ENCODE measurements at regions of chr17 and their contacts with region 1.

Region 1: GRCh38 chr17:45218895-45219661 is 2.6 kb upstream of the FMNL1 start:
- DNase-seq: peak; percentile 89
- ATAC-seq: no peak
- H3K4me3 Mint-ChIP-seq: peak overlapping the region; percentile 88
- H3K27ac Mint-ChIP-seq: peak overlapping the region; percentile 62
- H3K4me1 Mint-ChIP-seq: peaks cover 34% of the 10 kb centered on the region
- H3K27me3 Mint-ChIP-seq: no peaks in the 10 kb centered on the region

Region 2: GRCh38 chr17:44961921-44962350 is 257.1 kb before region 1 on chr17:
- CTCF ChIA-PET with region 1: no interaction called
- DNase-seq: no peak
- ATAC-seq: no peak
- H3K4me3 Mint-ChIP-seq: no peak overlapping the region
- H3K27ac Mint-ChIP-seq: no peak overlapping the region
- H3K4me1 Mint-ChIP-seq: peaks cover 3% of the 10 kb centered on the region
- H3K27me3 Mint-ChIP-seq: peaks cover 75% of the 10 kb centered on the region

Region 3: DNA sequence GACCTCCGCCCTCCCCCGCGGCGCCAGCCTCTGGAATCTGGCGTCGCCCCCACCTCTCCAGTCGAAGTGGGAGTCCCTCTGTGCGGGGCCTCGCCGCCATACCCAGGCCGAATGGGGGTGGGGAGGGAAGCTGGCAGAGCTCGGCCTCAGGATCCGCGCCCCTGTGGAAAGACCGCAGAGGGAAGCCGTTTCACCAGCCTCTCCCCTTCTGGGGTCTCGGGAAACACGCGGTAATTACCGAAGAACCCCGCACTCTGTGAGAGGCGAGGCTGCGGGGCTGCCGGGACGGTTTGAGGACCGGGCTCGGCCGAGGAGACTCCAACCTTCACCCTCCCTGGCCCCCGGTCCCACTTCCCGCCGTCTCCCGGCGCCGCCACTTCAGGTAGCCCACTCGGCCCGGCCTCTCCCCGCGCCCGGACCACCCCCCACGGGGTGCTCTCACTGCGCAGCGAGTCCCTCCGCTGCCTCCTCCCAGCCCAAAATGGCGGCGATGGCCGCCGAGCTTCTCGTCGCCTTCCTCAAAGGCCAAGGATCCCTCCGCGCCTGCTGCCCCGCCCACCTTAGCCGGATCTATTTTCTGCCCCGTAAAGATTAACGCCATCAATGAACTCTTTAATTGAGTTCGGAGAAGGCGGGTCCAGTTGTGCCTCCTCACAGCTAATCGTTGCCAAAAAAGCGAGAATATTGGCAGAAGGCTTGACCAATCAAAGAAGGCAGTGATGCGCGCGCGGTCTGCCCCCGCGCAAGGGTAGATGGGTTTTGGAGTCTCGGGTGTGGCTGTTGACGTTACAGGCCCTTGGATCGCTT is 57.9 kb before region 1 on chr17:
- CTCF ChIA-PET with region 1: interaction called, 10 read pairs
- DNase-seq: peak; percentile 99
- ATAC-seq: peak; percentile 96
- H3K4me3 Mint-ChIP-seq: peak overlapping the region; percentile 98
- H3K27ac Mint-ChIP-seq: peak overlapping the region; percentile 99
- H3K4me1 Mint-ChIP-seq: peaks cover 41% of the 10 kb centered on the region
- H3K27me3 Mint-ChIP-seq: no peaks in the 10 kb centered on the region

Region 4: DNA sequence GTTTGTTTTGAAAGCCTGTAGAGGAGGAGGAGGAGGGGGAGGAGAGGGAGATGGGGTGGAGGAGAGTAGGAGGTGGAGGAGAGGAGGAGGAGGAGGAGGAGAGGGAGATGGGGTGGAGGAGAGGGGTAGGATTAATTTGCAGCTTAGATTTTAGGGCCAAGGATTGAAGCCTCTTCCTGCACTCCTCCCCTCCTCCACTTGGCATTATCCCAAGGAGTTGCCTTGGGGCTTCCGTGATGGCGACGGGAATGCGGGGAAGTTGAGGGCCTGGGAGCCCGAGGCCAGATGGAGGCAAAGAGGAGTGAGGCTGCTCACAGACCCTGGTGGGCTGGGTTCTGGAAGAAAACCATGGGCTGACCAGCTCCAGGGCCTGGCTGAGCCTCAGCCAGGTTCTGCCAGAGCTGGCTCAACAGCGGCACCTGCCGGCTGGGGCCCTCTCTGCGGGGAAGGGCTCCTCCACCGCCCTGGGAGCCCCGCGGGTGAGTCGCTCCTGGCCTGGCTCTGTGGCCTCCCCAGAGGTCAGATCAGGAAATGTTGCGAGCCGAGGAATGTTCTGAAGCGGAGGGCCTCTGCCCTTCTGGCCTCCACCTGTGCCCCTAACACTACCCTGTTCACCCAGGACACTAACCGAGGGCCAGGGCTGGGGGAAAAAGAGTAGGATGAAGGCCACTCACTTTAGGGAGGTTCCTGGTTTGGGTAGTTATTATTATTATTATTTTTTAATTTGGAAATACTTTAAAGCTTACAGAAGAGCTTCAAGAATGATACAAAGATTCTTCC is 21.3 kb before region 1 on chr17:
- CTCF ChIA-PET with region 1: interaction called, 13 read pairs
- DNase-seq: peak; percentile 90
- ATAC-seq: peak; percentile 100
- H3K4me3 Mint-ChIP-seq: no peak overlapping the region
- H3K27ac Mint-ChIP-seq: peak overlapping the region; percentile 19
- H3K4me1 Mint-ChIP-seq: peaks cover 6% of the 10 kb centered on the region
- H3K27me3 Mint-ChIP-seq: no peaks in the 10 kb centered on the region

Region 5: GRCh38 chr17:45247429-45248131 is 28.5 kb after region 1 on chr17:
- CTCF ChIA-PET with region 1: interaction called, 386 read pairs
- DNase-seq: peak; percentile 100
- ATAC-seq: peak; percentile 91
- H3K4me3 Mint-ChIP-seq: peak overlapping the region; percentile 82
- H3K27ac Mint-ChIP-seq: peak overlapping the region; percentile 96
- H3K4me1 Mint-ChIP-seq: peaks cover 60% of the 10 kb centered on the region
- H3K27me3 Mint-ChIP-seq: no peaks in the 10 kb centered on the region

Region 6: GRCh38 chr17:45261577-45262515 is 42.8 kb after region 1 on chr17 and contains the start of gene SPATA32:
- CTCF ChIA-PET with region 1: interaction called, 26 read pairs
- DNase-seq: peak; percentile 88
- ATAC-seq: peak; percentile 91
- H3K4me3 Mint-ChIP-seq: peak within 1 kb of the TSS; percentile 74
- H3K27ac Mint-ChIP-seq: peak within 1 kb of the TSS; percentile 83
- H3K4me1 Mint-ChIP-seq: peaks cover 26% of the 10 kb centered on the region
- H3K27me3 Mint-ChIP-seq: no peaks in the 10 kb centered on the region
- total RNA-seq, gene SPATA32: 0.23 to 0.49 TPM

Region 7: GRCh38 chr17:45311760-45312476 is 92.8 kb after region 1 on chr17:
- CTCF ChIA-PET with region 1: interaction called, 19 read pairs
- DNase-seq: peak; percentile 94
- ATAC-seq: peak; percentile 57
- H3K4me3 Mint-ChIP-seq: peak overlapping the region; percentile 97
- H3K27ac Mint-ChIP-seq: peak overlapping the region; percentile 90
- H3K4me1 Mint-ChIP-seq: peaks cover 70% of the 10 kb centered on the region
- H3K27me3 Mint-ChIP-seq: no peaks in the 10 kb centered on the region